PC-9 (cell line): ENCODE measurements at regions of chr9 and their contacts with region 1.

Region 1: DNA sequence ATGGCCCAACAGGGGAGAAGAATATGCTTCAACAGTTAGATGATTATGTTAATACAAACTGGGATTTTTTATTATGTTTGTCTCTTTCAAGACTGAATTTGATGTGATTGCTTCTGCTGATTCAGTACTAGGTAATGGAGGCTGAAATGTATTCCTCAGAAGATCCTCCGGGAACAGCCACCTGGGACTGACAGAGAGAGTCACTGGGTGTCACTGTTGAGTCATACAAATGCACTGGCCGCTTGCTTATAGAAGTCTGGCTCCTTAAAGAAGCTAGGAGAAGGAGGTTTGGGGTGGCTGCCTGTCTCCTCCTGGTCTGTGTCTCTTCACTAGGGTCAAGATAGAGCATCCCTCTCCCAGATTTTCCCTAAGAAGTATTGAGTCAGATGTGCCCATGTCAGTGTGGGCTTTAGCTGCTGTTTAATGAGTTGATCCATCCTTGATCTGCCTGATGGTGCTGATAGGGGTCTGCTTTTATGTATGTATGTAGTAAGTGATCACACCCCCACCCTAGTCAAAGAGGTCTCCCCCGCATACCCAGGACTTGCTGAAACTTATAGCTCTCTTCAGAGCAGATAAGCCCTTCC is 773.4 kb downstream of the BRINP1 start:
- DNase-seq: peak in 1 of 2 experiments; percentile 48
- H3K4me3 ChIP-seq: no peak overlapping the region
- H3K27ac ChIP-seq: no peak overlapping the region
- H3K4me1 ChIP-seq: no peaks in the 10 kb centered on the region
- H3K27me3 ChIP-seq: no peaks in the 10 kb centered on the region
- CTCF ChIP-seq: peak; percentile 63

Region 2: DNA sequence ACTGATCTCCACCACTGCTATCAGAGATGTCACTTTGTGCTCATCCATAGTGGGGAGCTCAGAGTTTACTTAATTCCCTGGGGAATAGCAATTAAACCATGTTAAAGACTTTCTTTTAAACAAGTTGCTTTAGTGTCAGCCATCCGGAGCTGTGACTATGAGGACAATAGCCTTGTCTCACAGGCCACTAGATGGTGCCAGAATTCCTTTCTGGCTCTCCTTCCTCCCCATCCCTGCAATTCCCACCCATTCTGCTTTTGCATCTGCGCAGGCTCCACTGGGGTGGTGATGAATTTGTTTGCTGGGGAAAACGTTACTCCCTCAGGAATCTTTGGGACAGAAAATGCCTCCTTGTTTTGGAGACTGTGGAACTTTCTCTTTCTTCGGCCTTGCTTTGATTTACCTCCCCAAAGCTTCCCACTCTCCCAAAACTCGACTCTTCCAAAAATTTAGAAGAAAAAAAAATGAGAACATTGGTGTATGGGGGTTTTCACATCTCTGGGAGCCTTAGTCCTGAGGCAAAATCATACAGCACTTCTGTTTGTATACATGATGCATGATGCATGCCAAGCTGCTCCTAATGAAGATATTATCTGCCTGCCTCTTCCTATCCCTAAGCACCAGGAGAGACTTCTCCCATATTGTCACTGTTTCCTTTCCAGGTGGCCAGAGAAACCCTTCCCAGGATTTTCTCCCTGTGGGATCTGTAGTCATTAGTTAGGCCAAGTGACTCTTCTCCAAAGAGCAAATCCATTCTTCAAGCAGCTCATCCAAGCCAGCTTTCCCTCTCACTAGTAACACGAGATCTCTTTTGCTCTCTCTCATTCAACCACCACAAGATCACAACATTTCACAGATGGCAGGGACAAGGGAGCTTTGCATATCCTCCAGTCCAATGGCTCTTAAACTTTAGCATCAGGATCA is 425.5 kb before region 1 on chr9:
- CTCF ChIA-PET with region 1: interaction called, 4 read pairs
- POLR2A ChIA-PET with region 1: no interaction called
- intact Hi-C with region 1: loop called (anchors 5 kb)
- DNase-seq: peak in 1 of 2 experiments; percentile 39
- H3K4me3 ChIP-seq: no peak overlapping the region
- H3K27ac ChIP-seq: no peak overlapping the region
- H3K4me1 ChIP-seq: no peaks in the 10 kb centered on the region
- H3K27me3 ChIP-seq: no peaks in the 10 kb centered on the region
- CTCF ChIP-seq: peak; percentile 71

Region 3: GRCh38 chr9:118751848-118752223 is 156.0 kb after region 1 on chr9:
- CTCF ChIA-PET with region 1: no interaction called
- POLR2A ChIA-PET with region 1: no interaction called
- intact Hi-C with region 1: loop called (anchors 1 kb)
- DNase-seq: no peak
- H3K4me3 ChIP-seq: no peak overlapping the region
- H3K27ac ChIP-seq: no peak overlapping the region
- H3K4me1 ChIP-seq: no peaks in the 10 kb centered on the region
- H3K27me3 ChIP-seq: no peaks in the 10 kb centered on the region
- CTCF ChIP-seq: no peak

Region 4: GRCh38 chr9:119289740-119290433 is 694.1 kb after region 1 on chr9:
- CTCF ChIA-PET with region 1: no interaction called
- POLR2A ChIA-PET with region 1: no interaction called
- intact Hi-C with region 1: loop called (anchors 1 kb)
- DNase-seq: peak in 1 of 2 experiments; percentile 18
- H3K4me3 ChIP-seq: no peak overlapping the region
- H3K27ac ChIP-seq: no peak overlapping the region
- H3K4me1 ChIP-seq: no peaks in the 10 kb centered on the region
- H3K27me3 ChIP-seq: no peaks in the 10 kb centered on the region
- CTCF ChIP-seq: peak; percentile 72

Region 5: GRCh38 chr9:119357336-119358096 is 761.7 kb after region 1 on chr9:
- CTCF ChIA-PET with region 1: no interaction called
- POLR2A ChIA-PET with region 1: no interaction called
- intact Hi-C with region 1: loop called (anchors 10 kb)
- DNase-seq: no peak
- H3K4me3 ChIP-seq: no peak overlapping the region
- H3K27ac ChIP-seq: no peak overlapping the region
- H3K4me1 ChIP-seq: no peaks in the 10 kb centered on the region
- H3K27me3 ChIP-seq: peaks cover 3% of the 10 kb centered on the region; the same call in 1 of the 2 replicates
- CTCF ChIP-seq: no peak